ENCODE measurements at regions of chr2 and their contacts with region 1.

Region 1: GRCh38 chr2:33372940-33373553 is 103.4 kb upstream of the RASGRP3 start:
- DNase-seq: no peak
- H3K4me3 Mint-ChIP-seq: no peak overlapping the region
- H3K27ac Mint-ChIP-seq: no peak overlapping the region
- H3K4me1 Mint-ChIP-seq: no peaks in the 10 kb centered on the region
- H3K27me3 Mint-ChIP-seq: peaks cover 2% of the 10 kb centered on the region

Region 2: DNA sequence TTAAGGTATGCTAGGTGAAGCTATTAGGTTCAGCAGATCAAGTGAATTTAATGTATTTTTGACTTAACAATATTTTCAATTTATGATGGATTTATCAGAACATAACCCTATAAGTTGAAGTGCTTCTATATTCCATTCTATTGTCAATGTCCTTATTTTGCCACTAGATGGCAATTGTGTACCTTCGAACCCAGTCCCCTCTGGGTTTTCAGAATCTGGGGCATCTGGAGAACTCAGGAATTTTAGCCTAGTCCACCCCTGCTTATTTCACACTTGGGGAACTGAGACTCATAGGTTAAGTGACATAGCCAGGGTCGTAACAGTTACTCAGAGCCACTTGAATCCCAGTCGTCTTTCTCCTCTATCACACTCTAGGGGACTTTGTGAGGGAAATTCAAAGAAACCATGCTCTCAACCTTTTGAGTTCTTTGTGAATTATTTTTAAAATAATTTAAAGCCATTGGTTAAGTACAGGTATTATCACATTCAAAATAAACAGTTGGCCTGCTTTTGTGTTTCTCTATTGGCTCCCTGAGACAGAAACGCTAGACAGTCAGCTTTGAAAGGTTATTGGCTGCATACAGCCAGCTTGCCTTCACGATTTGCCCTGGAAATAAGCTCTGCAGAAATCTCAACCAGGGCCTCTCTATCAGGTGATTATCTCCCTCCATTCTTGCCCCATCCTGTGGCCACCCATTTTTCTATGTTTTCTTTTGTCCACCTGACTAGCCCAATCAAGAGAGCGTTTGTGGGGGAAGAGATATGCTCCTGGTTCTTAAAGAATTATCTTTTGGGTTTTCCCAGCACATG is 600.2 kb before region 1 on chr2:
- CTCF ChIA-PET with region 1: interaction called, 10 read pairs
- POLR2A ChIA-PET with region 1: no interaction called
- intact Hi-C with region 1: loop called (anchors 2 kb)
- DNase-seq: no peak
- H3K4me3 Mint-ChIP-seq: no peak overlapping the region
- H3K27ac Mint-ChIP-seq: no peak overlapping the region
- H3K4me1 Mint-ChIP-seq: peaks cover 7% of the 10 kb centered on the region
- H3K27me3 Mint-ChIP-seq: no peaks in the 10 kb centered on the region

Region 3: GRCh38 chr2:32946314-32947075 is 426.6 kb before region 1 on chr2 and contains the start of gene LTBP1:
- CTCF ChIA-PET with region 1: no interaction called
- POLR2A ChIA-PET with region 1: no interaction called
- intact Hi-C with region 1: loop called (anchors 10 kb)
- DNase-seq: peak; percentile 72
- H3K4me3 Mint-ChIP-seq: peak within 1 kb of the TSS; percentile 74
- H3K27ac Mint-ChIP-seq: no peak within 1 kb of the TSS
- H3K4me1 Mint-ChIP-seq: peaks cover under 1% of the 10 kb centered on the region
- H3K27me3 Mint-ChIP-seq: peaks cover 9% of the 10 kb centered on the region
- total RNA-seq, gene LTBP1: 0.10 to 0.27 TPM

Region 4: DNA sequence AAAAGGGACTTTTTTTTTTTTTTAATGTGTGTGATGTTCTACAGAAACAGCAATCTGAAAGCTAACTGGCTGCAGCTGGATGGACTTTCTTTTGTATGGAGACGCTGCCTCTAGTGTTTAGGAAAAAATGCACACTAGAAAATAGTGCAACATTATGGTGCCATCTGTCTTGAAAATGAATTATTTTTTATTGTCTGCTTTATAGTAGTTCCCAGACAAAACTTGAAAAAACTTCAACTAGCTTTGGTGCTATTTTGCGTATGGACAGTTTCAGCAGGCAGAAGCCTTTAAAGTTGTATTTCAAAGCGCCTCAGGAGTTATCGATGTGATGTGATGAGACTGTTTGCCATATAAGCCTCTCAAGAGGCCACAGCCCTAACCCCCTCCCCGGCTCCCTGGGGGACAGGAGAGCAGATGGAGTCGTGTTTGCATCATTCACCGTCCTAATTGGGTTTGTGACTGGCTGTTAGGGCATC is 339.4 kb before region 1 on chr2:
- CTCF ChIA-PET with region 1: interaction called, 4 read pairs
- POLR2A ChIA-PET with region 1: no interaction called
- intact Hi-C with region 1: loop called (anchors 10 kb)
- DNase-seq: no peak
- H3K4me3 Mint-ChIP-seq: no peak overlapping the region
- H3K27ac Mint-ChIP-seq: no peak overlapping the region
- H3K4me1 Mint-ChIP-seq: no peaks in the 10 kb centered on the region
- H3K27me3 Mint-ChIP-seq: no peaks in the 10 kb centered on the region

Region 5: DNA sequence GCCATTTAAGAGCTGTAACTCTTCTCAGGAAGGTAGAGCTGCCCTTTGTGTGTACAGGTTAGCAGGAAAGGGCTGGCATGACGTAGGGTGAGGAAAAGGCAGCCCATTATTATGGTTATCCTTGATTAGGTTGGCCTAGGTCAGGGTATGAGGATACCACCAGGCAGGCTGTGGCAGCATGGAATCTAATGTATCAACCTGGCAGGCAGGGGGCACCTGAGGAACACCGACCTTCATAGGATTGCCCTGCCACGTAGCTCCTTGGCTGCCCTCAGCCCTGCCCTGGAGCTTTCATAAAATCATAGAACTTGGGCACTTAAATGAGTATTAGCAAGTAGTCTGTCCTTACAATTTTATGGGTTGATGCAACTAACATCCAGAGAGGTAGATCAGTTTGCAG is 164.6 kb before region 1 on chr2:
- CTCF ChIA-PET with region 1: interaction called, 15 read pairs
- POLR2A ChIA-PET with region 1: no interaction called
- intact Hi-C with region 1: loop called (anchors 1 kb)
- DNase-seq: peak; percentile 33
- H3K4me3 Mint-ChIP-seq: no peak overlapping the region
- H3K27ac Mint-ChIP-seq: no peak overlapping the region
- H3K4me1 Mint-ChIP-seq: no peaks in the 10 kb centered on the region
- H3K27me3 Mint-ChIP-seq: peaks cover 7% of the 10 kb centered on the region

Measured in activated CD4-positive, alpha-beta memory T cell treated with anti-CD3 and anti-CD28 coated beads for 36 hours (primary cell).